ENCODE measurements at regions of chr9 and their contacts with region 1.

Region 1: GRCh38 chr9:83754383-83754977 is 46.7 kb upstream of the UBQLN1 start:
- DNase-seq: no peak
- ATAC-seq: no peak
- H3K4me3 ChIP-seq: no peak overlapping the region
- H3K27ac ChIP-seq: no peak overlapping the region
- H3K4me1 ChIP-seq: no peaks in the 10 kb centered on the region
- H3K27me3 ChIP-seq: no peaks in the 10 kb centered on the region
- CTCF ChIP-seq: no peak

Region 2: DNA sequence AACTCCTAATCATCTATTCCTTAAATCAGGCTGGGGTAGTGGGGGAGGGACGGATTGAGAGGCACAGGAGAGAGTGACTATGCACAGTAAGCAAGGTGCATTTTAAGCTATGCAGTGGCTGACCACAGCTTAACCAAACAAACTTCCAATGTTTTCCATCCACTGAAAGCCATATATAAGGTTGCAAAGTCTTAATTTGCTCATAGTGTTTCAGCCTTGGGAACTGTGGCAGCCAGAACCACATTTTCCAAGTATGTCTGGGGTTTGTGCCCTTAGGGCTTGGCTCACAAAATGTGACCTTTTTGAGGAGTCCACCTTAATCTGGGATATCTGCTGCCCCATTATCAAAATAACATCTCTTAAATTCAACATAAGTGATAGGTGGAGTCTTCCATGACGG is 31.8 kb before region 1 on chr9:
- intact Hi-C with region 1: loop called in 1 of 10 experiments (anchors 2 kb)
- DNase-seq: no peak
- ATAC-seq: no peak
- H3K4me3 ChIP-seq: no peak overlapping the region
- H3K27ac ChIP-seq: no peak overlapping the region
- H3K4me1 ChIP-seq: no peaks in the 10 kb centered on the region
- H3K27me3 ChIP-seq: no peaks in the 10 kb centered on the region
- CTCF ChIP-seq: no peak